Activated CD4-positive, alpha-beta T cell treated with anti-CD3 and anti-CD28 coated beads for 36 hours (primary cell): ENCODE measurements at regions of chr21 and their contacts with region 1.

Region 1: GRCh38 chr21:40313304-40313703 is 446.1 kb downstream of the PCP4 start:
- DNase-seq: no peak
- ATAC-seq: no peak
- H3K4me3 Mint-ChIP-seq: no peak overlapping the region
- H3K27ac Mint-ChIP-seq: no peak overlapping the region
- H3K4me1 Mint-ChIP-seq: no peaks in the 10 kb centered on the region
- H3K27me3 Mint-ChIP-seq: peaks cover 2% of the 10 kb centered on the region

Region 2: GRCh38 chr21:40272037-40272436 is 41.3 kb before region 1 on chr21:
- CTCF ChIA-PET with region 1: no interaction called
- POLR2A ChIA-PET with region 1: no interaction called
- intact Hi-C with region 1: loop called in 1 of 2 experiments (anchors 1 kb)
- DNase-seq: no peak
- ATAC-seq: no peak
- H3K4me3 Mint-ChIP-seq: no peak overlapping the region
- H3K27ac Mint-ChIP-seq: no peak overlapping the region
- H3K4me1 Mint-ChIP-seq: no peaks in the 10 kb centered on the region
- H3K27me3 Mint-ChIP-seq: peaks cover 3% of the 10 kb centered on the region